ENCODE measurements at regions of chr2 and their contacts with region 1.

Region 1: GRCh38 chr2:64052468-64053241 is 33.4 kb upstream of the VPS54 start:
- DNase-seq: no peak
- ATAC-seq: no peak

Region 2: GRCh38 chr2:64311948-64312621 is 259.4 kb after region 1 on chr2:
- intact Hi-C with region 1: loop called (anchors 1 kb)
- DNase-seq: peak; percentile 86
- ATAC-seq: peak; percentile 93

Region 3: DNA sequence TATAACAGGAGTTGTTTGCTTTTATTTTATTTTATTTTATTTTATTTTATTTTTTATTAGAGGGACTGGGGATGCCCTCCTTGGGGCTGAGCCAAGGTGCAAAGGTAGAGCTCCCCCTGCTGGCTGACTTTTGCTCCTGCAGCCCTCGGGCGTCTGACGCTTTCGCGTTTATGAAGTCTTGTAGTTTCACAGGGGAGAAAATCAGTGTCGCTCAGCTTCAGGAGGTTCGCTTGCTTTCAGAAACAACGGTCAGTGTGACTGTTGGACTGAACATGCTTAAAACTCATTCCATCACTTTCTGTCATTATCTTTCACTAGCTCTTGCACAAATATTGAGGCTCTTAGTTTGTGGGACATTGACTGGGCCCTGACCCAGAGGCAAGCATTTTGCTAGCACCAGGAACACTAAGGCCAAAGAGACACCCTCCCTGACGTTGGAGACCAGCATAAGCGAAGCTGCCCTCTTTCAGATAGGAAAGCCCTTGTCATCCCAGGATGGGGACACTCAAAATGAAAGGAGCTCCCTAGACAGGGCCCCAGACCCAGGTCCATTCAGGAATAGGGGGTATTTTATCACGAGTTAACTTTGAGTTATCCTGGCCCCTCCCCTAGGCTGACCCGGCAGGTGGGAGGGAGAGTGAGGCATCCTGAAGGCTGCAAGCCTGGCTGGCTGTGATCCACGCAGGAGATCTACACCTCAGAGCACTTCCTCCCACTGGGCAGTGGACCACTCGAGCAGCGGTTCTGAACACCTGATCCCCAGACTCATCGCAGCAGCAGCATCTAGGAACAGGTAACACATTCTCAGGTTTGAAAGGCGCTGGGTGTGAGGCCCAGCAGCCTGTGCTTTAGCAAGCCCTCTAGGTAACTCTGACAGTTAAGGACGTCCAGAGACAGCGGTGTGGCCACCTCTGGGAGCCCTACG is 435.7 kb after region 1 on chr2:
- intact Hi-C with region 1: loop called (anchors 5 kb)
- DNase-seq: peak; percentile 77
- ATAC-seq: no peak

Measured in Right ventricle myocardium inferior (tissue), 1 donor.